CD8-positive, alpha-beta T cell (primary cell): ENCODE measurements at regions of chr6 and their contacts with region 1.

Region 1: DNA sequence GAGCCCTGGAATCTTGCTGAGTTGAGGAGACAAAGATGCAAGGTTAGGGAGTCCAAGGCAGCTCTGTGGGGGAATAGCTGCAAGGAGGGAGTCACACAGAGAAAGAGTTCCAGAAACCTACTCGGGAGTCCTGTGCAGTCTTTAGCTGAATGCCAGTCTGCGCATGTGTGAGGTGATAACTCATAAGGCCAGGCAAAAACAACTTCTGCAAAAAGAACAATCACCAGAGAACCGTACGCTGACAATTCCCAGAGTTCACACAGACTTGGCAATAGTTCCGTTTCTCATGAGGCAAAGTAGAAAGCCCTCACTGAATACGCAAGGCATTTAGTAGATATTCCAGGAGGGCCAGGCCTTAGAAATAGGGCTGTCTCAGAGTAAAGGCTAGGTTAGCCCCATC is 135.2 kb upstream of the TAB2 start:
- DNase-seq: no peak
- ATAC-seq: no peak
- H3K4me3 ChIP-seq: no peak overlapping the region
- H3K4me3 Mint-ChIP-seq: no peak overlapping the region
- H3K27ac ChIP-seq: no peak overlapping the region
- H3K27ac Mint-ChIP-seq: no peak overlapping the region
- H3K4me1 ChIP-seq: no peaks in the 10 kb centered on the region
- H3K4me1 Mint-ChIP-seq: no peaks in the 10 kb centered on the region
- H3K27me3 ChIP-seq: no peaks in the 10 kb centered on the region
- H3K27me3 Mint-ChIP-seq: no peaks in the 10 kb centered on the region
- CTCF ChIP-seq: no peak

Region 2: DNA sequence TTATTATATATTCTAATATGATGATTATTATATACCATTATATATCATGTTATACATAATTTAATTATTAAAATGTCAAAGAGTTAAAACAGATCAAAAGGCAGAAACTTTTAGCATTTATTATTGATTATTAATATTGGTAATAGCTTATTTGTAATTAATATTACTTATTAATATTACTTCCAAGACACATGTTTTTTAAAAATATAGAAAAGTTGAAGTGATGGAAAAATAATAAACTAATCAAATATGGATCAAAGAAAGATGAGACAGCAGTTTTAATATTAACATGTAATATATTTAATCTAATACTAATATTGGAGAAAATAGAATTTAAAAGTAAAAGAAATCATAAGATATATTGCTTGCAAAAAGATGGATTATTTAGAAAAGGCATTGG is 19.3 kb before region 1 on chr6:
- CTCF ChIA-PET with region 1: interaction called, 3 read pairs
- POLR2A ChIA-PET with region 1: interaction called, 10 read pairs
- intact Hi-C with region 1: no loop called
- DNase-seq: no peak
- ATAC-seq: no peak
- H3K4me3 ChIP-seq: no peak overlapping the region
- H3K4me3 Mint-ChIP-seq: no peak overlapping the region
- H3K27ac ChIP-seq: no peak overlapping the region
- H3K27ac Mint-ChIP-seq: no peak overlapping the region
- H3K4me1 ChIP-seq: peaks cover 20% of the 10 kb centered on the region
- H3K4me1 Mint-ChIP-seq: peaks cover 22% of the 10 kb centered on the region
- H3K27me3 ChIP-seq: no peaks in the 10 kb centered on the region
- H3K27me3 Mint-ChIP-seq: no peaks in the 10 kb centered on the region
- CTCF ChIP-seq: no peak

Region 3: GRCh38 chr6:150091476-150091875 is 909.2 kb after region 1 on chr6:
- CTCF ChIA-PET with region 1: no interaction called
- POLR2A ChIA-PET with region 1: no interaction called
- intact Hi-C with region 1: no loop called
- DNase-seq: no peak
- ATAC-seq: no peak
- H3K4me3 ChIP-seq: no peak overlapping the region
- H3K4me3 Mint-ChIP-seq: no peak overlapping the region
- H3K27ac ChIP-seq: no peak overlapping the region
- H3K27ac Mint-ChIP-seq: no peak overlapping the region
- H3K4me1 ChIP-seq: no peaks in the 10 kb centered on the region
- H3K4me1 Mint-ChIP-seq: peaks cover 3% of the 10 kb centered on the region
- H3K27me3 ChIP-seq: no peaks in the 10 kb centered on the region
- H3K27me3 Mint-ChIP-seq: peaks cover 11% of the 10 kb centered on the region
- CTCF ChIP-seq: no peak